Activated CD4-positive, alpha-beta T cell treated with anti-CD3 and anti-CD28 coated beads, Interleukin-2, amount 10 ng/mL, durations not matched to agents 24 days and 14 days (primary cell): ENCODE measurements at regions of chr6 and their contacts with region 1.

Region 1: GRCh38 chr6:24359640-24360454 is 2.0 kb upstream of the DCDC2 start:
- DNase-seq: peak; percentile 94
- H3K4me3 Mint-ChIP-seq: peak overlapping the region; percentile 80
- H3K27ac Mint-ChIP-seq: peak overlapping the region; percentile 74
- H3K4me1 Mint-ChIP-seq: peaks cover 14% of the 10 kb centered on the region
- H3K27me3 Mint-ChIP-seq: peaks cover 53% of the 10 kb centered on the region

Region 2: GRCh38 chr6:24283043-24283985 is 76.5 kb before region 1 on chr6:
- intact Hi-C with region 1: loop called (anchors 1 kb)
- DNase-seq: peak; percentile 64
- H3K4me3 Mint-ChIP-seq: no peak overlapping the region
- H3K27ac Mint-ChIP-seq: no peak overlapping the region
- H3K4me1 Mint-ChIP-seq: peaks cover 4% of the 10 kb centered on the region
- H3K27me3 Mint-ChIP-seq: peaks cover 6% of the 10 kb centered on the region